HepG2 (cell line): ENCODE measurements at regions of chr20 and their contacts with region 1.

Region 1: DNA sequence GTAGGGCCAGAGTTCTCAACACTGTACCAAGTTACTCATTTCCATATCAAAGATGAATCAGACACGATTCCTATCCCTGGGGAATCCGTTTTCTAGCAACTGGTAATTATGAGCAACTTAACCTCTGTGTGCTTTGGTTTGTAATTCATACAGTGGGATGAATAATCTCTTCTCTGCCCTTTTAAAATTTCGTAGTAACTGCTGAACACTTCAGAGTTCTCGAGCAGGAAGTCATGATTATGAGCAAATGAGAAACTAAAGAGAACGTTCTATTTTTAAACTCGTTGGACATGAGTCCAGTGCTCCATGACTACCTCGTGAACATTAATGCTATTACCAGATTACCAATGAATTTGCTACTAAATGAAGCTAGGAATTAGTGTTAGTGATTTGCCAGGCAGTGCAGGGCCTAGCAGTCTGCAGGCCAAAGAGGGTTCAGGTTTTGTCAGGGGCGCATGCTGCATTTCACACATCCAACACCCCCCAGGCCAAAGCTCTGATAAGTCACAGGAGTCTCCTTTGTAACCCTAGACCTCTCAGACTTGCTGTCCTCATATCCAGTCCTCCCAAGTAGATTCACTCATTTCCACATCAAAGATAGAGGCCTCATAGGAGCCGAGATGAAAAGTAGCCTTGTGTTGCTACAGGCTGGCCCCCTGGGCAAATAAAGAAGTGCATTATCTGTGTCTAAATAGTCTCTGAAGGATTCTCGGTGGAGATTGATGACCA is 45.8 kb upstream of the VSTM2L start:
- DNase-seq: no peak
- ATAC-seq: no peak
- H3K4me3 ChIP-seq: no peak overlapping the region
- H3K27ac ChIP-seq: no peak overlapping the region
- H3K4me1 ChIP-seq: no peaks in the 10 kb centered on the region
- H3K27me3 ChIP-seq: no peaks in the 10 kb centered on the region
- CTCF ChIP-seq: no peak
- EP300 ChIP-seq: no peak
- POLR2A ChIP-seq: no peak
- RAD21 ChIP-seq: no peak

Region 2: GRCh38 chr20:37833221-37833896 is 23.7 kb before region 1 on chr20:
- CTCF ChIA-PET with region 1: no interaction called
- POLR2A ChIA-PET with region 1: no interaction called
- in situ Hi-C with region 1: no loop called
- intact Hi-C with region 1: loop called (anchors 1 kb)
- DNase-seq: no peak
- ATAC-seq: no peak
- H3K4me3 ChIP-seq: no peak overlapping the region
- H3K27ac ChIP-seq: no peak overlapping the region
- H3K4me1 ChIP-seq: peaks cover 13% of the 10 kb centered on the region
- H3K27me3 ChIP-seq: no peaks in the 10 kb centered on the region
- CTCF ChIP-seq: no peak
- EP300 ChIP-seq: no peak
- POLR2A ChIP-seq: no peak
- RAD21 ChIP-seq: no peak

Region 3: GRCh38 chr20:37880726-37881591 is 23.9 kb after region 1 on chr20:
- CTCF ChIA-PET with region 1: no interaction called
- POLR2A ChIA-PET with region 1: no interaction called
- in situ Hi-C with region 1: no loop called
- intact Hi-C with region 1: no loop called
- DNase-seq: peak; percentile 70
- ATAC-seq: peak; percentile 62
- H3K4me3 ChIP-seq: peak overlapping the region in 2 of 3 experiments; percentile 23 to 59; a peak in 4 of 6 replicates
- H3K27ac ChIP-seq: no peak overlapping the region
- H3K4me1 ChIP-seq: peaks cover 74% of the 10 kb centered on the region
- H3K27me3 ChIP-seq: peaks cover 10 to 25% of the 10 kb centered on the region in 2 experiments; a peak in 4 of 5 replicates
- CTCF ChIP-seq: 0 out of 2 replicates have a peak, but pooled peaks have one; percentile 3
- EP300 ChIP-seq: peak; percentile 12 to 25; a peak in 1 of 4 replicates
- POLR2A ChIP-seq: 0 out of 4 replicates have a peak, but pooled peaks of 1 of the 2 experiments have one; percentile 31
- RAD21 ChIP-seq: no peak